PC-3 (cell line): ENCODE measurements at regions of chr11 and their contacts with region 1.

Region 1: DNA sequence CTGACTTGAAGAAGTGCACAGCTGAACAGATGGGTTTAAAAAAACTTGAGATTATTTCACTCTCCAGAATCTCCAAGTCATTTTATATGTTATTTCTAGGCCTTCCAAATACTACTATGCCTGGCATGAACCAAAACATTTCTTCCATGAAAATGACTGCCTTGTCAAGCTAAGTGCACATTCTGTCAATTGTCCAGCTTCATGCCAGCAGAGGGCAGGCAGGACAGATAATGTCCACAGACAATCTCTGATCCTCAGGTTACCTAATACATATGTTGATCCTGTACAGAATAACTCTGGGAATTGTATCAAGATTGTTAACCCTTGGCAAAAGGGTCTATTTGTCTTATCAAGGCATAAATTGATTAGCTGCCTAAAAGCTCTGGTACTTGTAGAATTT is 229.5 kb downstream of the AASDHPPT start:
- DNase-seq: peak; percentile 44
- ATAC-seq: peak; percentile 82
- H3K4me3 ChIP-seq: no peak overlapping the region
- H3K27ac ChIP-seq: no peak overlapping the region
- H3K4me1 ChIP-seq: peaks cover 10% of the 10 kb centered on the region
- H3K27me3 ChIP-seq: no peaks in the 10 kb centered on the region
- CTCF ChIP-seq: peak; percentile 62

Region 2: DNA sequence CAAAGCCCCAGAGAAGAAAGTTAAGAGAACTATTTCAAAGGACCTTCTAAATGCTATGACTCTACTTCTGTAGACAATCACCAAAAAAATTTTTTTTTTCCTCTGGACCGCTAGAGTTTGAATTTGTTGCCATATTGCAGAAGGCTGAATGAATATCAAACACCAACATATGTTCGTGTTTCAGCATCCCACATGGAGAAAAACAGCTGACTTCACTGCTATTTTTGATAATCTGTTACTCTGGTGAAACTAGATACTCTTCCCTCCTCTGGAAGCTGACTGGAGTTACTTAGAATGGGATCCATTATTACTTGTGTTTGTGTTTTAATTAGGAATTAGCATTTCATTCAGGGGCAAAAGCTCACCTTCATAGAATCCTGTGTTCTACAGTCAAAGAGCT is 217.5 kb after region 1 on chr11:
- CTCF ChIA-PET with region 1: no interaction called
- POLR2A ChIA-PET with region 1: no interaction called
- intact Hi-C with region 1: no loop called
- DNase-seq: no peak
- ATAC-seq: no peak
- H3K4me3 ChIP-seq: no peak overlapping the region
- H3K27ac ChIP-seq: no peak overlapping the region
- H3K4me1 ChIP-seq: peaks cover 7% of the 10 kb centered on the region; the same call in 1 of the 2 replicates
- H3K27me3 ChIP-seq: no peaks in the 10 kb centered on the region
- CTCF ChIP-seq: no peak

Region 3: GRCh38 chr11:107043242-107044006 is 736.5 kb after region 1 on chr11:
- CTCF ChIA-PET with region 1: no interaction called
- POLR2A ChIA-PET with region 1: no interaction called
- intact Hi-C with region 1: loop called (anchors 10 kb)
- DNase-seq: peak; percentile 81
- ATAC-seq: peak; percentile 73
- H3K4me3 ChIP-seq: no peak overlapping the region
- H3K27ac ChIP-seq: peak overlapping the region; percentile 20
- H3K4me1 ChIP-seq: peaks cover 19% of the 10 kb centered on the region
- H3K27me3 ChIP-seq: no peaks in the 10 kb centered on the region
- CTCF ChIP-seq: no peak